ENCODE measurements at regions of chr18 and their contacts with region 1.

Region 1: GRCh38 chr18:73136134-73136533 is 268.3 kb upstream of the NETO1 start:
- DNase-seq: no peak

Region 2: GRCh38 chr18:72762515-72763122 is 373.5 kb before region 1 on chr18:
- intact Hi-C with region 1: loop called (anchors 10 kb)
- DNase-seq: no peak

Region 3: GRCh38 chr18:73164430-73164829 is 28.3 kb after region 1 on chr18:
- intact Hi-C with region 1: no loop called
- DNase-seq: no peak

Region 4: DNA sequence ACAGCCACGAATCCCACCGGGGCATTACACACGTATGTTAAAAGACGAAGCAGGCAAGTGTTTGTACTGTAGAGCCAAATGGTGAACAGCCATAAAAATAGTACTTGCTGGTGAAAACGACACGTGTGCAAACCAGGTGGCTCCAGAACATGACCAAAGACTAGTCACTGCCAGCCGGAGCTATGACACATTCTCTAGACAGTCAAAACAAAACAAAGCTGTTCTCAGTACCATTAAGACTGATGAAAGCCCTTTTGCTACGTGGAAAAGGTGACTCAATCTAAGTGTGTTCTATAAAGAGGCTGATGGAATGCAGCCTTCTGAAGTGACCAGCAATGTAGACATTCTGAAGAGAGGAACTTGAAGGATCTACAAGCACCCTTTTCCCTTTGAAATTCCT is 99.4 kb after region 1 on chr18:
- intact Hi-C with region 1: no loop called
- DNase-seq: no peak